ENCODE measurements at regions of chr9 and their contacts with region 1.

Region 1: DNA sequence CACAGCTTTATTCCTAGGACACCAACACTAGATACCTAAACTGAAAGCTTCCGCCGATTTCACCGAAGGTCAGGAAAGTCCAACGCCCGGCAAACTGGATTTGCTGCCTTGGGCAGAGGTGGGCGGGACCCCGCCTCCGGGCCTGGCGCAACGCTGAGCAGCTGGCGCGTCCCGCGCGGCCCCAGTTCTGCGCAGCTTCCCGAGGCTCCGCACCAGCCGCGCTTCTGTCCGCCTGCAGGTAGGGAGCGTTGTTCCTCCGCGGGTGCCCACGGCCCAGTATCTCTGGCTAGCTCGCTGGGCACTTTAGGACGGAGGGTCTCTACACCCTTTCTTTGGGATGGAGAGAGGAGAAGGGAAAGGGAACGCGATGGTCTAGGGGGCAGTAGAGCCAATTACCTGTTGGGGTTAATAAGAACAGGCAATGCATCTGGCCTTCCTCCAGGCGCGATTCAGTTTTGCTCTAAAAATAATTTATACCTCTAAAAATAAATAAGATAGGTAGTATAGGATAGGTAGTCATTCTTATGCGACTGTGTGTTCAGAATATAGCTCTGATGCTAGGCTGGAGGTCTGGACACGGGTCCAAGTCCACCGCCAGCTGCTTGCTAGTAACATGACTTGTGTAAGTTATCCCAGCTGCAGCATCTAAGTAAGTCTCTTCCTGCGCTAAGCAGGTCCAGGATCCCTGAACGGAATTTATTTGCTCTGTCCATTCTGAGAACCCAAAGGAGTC is at the start of gene CD274:
- DNase-seq: peak; percentile 93
- H3K4me3 ChIP-seq: peak within 1 kb of the TSS; percentile 50 to 62 (median 57)
- H3K27ac ChIP-seq: peak within 1 kb of the TSS; percentile 78 to 79 (median 78)
- H3K4me1 ChIP-seq: peaks cover 0 to 15% (median 3%) of the 10 kb centered on the region in 4 donors
- H3K27me3 ChIP-seq: no peaks in the 10 kb centered on the region
- CTCF ChIP-seq: peak; percentile 38 to 57 (median 50)
- EP300 ChIP-seq: no peak
- POLR2A ChIP-seq: no peak
- total RNA-seq, gene CD274: 0.68 to 8.9 (median 1.3) TPM

Region 2: DNA sequence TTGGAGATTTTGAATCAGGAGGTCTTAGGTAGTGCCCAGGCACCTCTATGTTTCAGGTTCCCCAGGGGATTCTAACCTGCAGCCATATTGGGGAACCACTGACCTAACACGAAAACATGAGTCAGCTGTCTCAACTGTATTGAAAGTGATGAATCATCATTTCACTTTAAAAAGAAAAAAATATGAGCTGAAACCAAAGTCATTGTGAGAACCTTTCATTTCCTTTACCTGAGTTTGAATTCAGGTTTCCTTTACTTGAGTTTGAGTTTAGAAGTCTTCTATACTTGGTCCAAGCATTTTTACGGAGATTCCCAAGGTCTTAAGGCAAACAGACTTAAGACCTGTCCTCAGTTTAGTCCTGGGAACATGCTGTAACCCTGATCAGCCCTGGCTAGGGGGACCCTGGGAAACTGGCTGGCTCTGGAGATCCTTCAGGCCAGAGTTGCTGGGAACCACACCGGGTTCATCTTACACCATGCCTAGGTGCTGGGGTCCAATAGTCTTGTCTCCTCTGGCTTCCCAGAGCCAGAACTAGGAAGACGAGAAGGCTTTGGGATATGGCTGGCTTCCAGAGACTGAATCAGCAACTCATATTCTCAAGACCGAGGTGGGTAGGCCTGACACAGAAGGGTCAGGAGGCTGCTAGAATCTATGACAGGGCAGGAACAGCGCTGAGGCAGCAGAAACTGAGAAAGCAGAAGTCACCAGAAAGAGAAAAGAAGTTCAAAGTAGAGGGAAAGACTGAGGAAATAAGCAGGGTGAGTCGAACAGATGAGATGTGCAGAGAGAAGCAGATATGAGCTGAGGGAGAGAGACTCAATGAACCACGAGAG is 43.4 kb after region 1 on chr9:
- intact Hi-C with region 1: no loop called
- DNase-seq: no peak
- H3K4me3 ChIP-seq: no peak overlapping the region
- H3K27ac ChIP-seq: peak overlapping the region in 1 of 4 donors; percentile 25
- H3K4me1 ChIP-seq: no peaks in the 10 kb centered on the region
- H3K27me3 ChIP-seq: no peaks in the 10 kb centered on the region
- CTCF ChIP-seq: no peak
- EP300 ChIP-seq: no peak
- POLR2A ChIP-seq: no peak

Region 3: DNA sequence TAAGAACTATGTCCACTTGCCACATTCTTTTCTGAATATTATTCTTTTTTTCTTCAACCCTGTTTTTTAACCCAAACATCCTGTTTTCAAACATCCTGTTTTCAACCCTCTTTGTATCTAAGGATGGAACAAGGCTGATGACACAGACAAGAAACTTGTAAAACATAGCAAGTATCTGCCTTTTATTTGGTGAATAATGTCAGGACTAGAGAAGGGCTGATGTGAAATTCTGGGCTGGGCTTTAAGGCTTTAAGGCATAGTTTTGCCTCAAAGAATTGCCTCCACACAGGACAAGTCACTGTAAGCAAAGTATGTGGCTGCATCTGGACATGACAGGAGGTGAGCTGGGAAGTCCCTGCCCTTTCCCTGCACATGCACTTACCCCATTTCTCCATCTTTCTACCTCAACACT is 135.9 kb after region 1 on chr9:
- intact Hi-C with region 1: loop called (anchors 2 kb)
- DNase-seq: no peak
- H3K4me3 ChIP-seq: no peak overlapping the region
- H3K27ac ChIP-seq: no peak overlapping the region
- H3K4me1 ChIP-seq: peaks cover 0 to 2% (median 0%) of the 10 kb centered on the region in 4 donors
- H3K27me3 ChIP-seq: no peaks in the 10 kb centered on the region
- CTCF ChIP-seq: no peak
- EP300 ChIP-seq: no peak
- POLR2A ChIP-seq: no peak

Measured in sigmoid colon (tissue), 7 donors.